Mammary epithelial cell (primary cell): ENCODE measurements at regions of chr1 and their contacts with region 1.

Region 1: DNA sequence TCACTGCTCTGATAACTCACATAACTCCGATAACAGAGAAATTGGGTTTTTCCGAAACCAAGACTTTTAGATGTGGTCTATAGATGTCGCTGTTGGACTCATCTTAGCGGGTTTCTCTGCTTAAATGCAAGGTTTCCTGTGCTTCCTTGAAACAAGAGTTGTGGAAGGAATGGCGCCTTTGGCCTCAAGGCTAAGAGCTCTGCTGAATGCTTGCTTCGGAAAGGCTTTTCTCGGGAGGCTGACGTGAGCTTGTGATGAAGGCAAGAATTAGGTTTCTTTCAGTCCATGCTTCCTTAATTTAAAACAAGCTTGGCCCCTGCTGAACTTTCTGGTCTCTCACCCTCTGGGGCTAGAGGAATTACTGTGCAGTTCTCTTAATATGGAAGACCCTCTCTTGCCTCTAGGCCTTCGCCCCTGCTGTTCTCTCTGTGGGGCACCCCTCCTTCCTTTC is 113.5 kb downstream of the MAP3K21 start:
- DNase-seq: peak; percentile 58
- H3K4me3 ChIP-seq: no peak overlapping the region
- H3K27ac ChIP-seq: no peak overlapping the region
- H3K4me1 ChIP-seq: peaks cover 8% of the 10 kb centered on the region
- H3K27me3 ChIP-seq: no peaks in the 10 kb centered on the region
- CTCF ChIP-seq: peak; percentile 64 to 75

Region 2: DNA sequence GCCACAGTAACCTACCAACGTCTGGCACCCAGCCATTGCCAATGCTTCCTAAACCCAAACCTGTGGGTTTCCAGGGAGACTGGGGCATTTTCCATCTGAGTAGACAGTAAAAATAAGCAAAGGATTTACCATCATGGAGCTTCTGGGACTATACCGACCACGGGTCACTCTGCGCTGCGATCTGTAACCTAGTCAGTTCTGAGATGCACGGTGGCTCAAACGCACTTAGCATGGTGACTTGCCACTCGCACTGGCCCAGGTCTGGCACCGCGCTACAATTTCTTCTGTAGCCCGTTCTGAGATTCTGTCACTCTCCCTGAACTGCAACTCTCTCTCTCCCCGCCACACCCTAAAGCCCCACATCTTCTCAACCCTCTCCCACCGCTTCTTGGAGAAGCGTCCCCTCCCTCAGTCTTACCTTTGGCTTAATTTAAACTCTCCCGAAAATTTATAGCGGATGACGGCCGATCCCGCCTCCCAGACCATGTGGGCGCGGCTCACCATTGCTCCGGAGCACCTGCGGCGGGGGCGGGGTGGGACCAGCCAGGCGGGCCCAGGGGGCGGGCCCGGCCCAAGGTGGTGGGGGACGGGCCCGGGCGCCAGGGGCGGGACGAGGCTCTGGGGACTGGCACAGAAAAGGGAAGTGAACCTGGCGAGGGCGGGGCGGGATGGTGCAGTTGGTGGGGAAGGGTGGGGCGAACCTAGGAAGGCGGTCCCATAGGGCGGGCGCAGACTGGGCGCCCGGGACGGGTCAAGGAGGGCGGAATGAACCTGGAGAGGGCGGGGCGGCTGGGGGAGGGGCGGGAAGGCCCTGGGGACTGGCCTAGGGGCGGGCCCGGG is 113.9 kb before region 1 on chr1:
- CTCF ChIA-PET with region 1: no interaction called
- dilution Hi-C with region 1: no loop called
- in situ Hi-C with region 1: no loop called
- intact Hi-C with region 1: no loop called
- DNase-seq: peak; percentile 96
- H3K4me3 ChIP-seq: peak overlapping the region; percentile 43 to 52 (median 48)
- H3K27ac ChIP-seq: peak overlapping the region; percentile 11
- H3K4me1 ChIP-seq: peaks cover 30% of the 10 kb centered on the region
- H3K27me3 ChIP-seq: no peaks in the 10 kb centered on the region
- CTCF ChIP-seq: no peak

Region 3: DNA sequence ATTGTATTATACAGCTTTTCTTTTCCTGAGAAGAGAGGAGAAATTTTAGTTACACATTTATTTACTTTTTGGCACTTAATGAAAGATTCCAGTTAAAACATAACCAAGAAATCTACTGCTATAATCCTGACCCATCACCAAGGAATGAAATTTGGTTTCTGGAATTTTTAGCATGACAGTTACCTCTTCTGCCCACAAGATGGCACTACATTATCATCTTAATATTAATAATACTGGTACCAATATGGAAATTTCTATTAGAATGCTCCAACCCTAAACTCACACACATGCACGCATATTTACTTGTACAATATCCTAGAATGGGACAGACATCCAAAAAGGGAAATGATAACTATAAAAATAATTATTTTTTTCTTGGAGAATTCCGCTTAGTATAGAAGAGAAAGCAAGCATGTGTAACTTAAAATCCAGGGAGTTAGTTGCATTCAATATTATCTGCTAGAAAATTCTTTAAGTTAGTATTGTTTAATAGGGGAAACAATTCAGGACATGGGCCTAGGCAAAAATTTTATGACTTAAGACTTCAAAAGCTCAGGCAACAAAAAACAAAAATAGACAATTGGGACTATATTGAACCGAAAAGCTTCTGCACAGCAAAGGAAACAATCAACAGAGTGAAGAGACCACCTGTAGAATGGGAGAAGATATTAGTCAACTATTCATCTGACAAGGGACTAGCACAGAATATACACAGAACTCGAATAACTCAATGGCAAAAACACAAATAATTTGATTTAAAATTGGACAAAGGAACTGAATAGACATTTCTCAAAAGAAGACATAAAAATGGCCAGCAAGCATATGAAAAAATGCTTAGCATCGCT is 76.1 kb before region 1 on chr1:
- CTCF ChIA-PET with region 1: no interaction called
- dilution Hi-C with region 1: no loop called
- in situ Hi-C with region 1: no loop called
- intact Hi-C with region 1: no loop called
- DNase-seq: no peak
- H3K4me3 ChIP-seq: no peak overlapping the region
- H3K27ac ChIP-seq: no peak overlapping the region
- H3K4me1 ChIP-seq: peaks cover 4% of the 10 kb centered on the region
- H3K27me3 ChIP-seq: no peaks in the 10 kb centered on the region
- CTCF ChIP-seq: peak; percentile 52 to 59

Region 4: DNA sequence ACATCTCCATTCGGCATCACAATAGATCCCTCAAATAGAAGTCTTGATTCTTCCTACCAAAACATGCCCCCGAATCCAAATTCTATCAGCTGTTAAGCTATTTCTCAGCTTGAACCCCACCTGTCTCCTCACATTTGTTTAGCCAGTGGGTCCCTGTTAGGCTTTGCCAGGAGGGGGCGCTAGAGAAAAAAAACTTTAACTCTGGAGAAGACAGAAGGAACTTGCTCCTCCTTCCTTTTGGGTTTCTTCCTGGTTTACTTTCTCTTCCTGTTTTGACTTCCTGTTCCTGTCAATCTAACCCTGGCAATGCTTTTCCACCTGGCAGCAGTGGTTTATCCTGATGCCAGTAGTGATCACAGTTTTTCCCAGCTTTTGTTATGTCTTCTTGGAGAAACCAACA is 77.4 kb after region 1 on chr1:
- CTCF ChIA-PET with region 1: no interaction called
- dilution Hi-C with region 1: no loop called
- in situ Hi-C with region 1: no loop called
- intact Hi-C with region 1: no loop called
- DNase-seq: peak; percentile 54
- H3K4me3 ChIP-seq: no peak overlapping the region
- H3K27ac ChIP-seq: no peak overlapping the region
- H3K4me1 ChIP-seq: peaks cover 22% of the 10 kb centered on the region
- H3K27me3 ChIP-seq: peaks cover 2% of the 10 kb centered on the region
- CTCF ChIP-seq: peak; percentile 67 to 74

Region 5: DNA sequence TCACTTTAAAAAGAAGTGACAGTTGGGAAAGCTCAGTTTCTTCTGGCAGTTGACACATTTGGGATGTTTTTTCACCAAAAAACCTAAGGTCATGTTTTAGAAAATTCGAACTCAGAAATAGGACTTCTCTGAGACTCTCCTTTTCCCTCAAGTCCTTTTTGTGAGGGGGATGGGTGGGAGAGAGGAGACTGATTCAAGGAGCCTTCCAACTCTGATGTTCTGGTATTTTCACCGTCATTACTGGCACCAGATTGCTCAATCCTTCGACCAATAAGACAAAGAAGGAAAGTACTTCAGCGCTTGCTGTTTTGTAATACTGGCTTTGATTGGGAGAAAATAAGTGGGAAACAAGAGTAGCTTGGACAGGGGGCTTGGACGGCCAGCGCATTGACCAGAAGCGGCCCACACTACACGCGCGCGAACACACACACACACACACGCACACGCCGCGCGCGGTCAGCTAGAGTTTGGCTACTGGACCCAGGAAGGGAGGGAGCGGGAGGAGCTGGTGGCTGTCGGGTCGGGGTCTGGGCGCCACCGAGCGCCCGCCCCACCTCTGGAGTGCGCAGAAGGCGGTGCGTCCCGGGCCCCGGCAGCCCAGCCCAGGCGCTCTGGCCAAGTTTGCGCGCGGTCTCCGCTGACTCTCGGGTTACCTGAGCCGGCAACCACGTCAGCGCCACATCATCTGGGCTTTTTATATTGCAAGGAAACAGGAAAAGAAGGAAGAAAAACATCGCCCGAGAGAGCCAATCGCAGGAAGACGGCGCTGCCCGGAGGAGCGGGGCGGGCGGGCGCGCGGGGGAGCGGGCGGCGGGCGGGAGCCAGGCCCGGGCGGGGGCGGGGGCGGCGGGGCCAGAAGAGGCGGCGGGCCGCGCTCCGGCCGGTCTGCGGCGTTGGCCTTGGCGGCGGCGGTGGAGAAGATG is 172.5 kb after region 1 on chr1 and contains the start of gene KCNK1:
- CTCF ChIA-PET with region 1: no interaction called
- dilution Hi-C with region 1: no loop called
- in situ Hi-C with region 1: no loop called
- intact Hi-C with region 1: loop called (anchors 2 kb)
- DNase-seq: peak; percentile 90
- H3K4me3 ChIP-seq: peak within 1 kb of the TSS; percentile 66 to 97 (median 83)
- H3K27ac ChIP-seq: peak within 1 kb of the TSS; percentile 87
- H3K4me1 ChIP-seq: peaks cover 6% of the 10 kb centered on the region
- H3K27me3 ChIP-seq: no peaks in the 10 kb centered on the region
- CTCF ChIP-seq: no peak
- total RNA-seq, gene KCNK1: 9.0 to 20.6 TPM